Ascending aorta (tissue), 2 donors: ENCODE measurements at regions of chr11 and their contacts with region 1.

Region 1: DNA sequence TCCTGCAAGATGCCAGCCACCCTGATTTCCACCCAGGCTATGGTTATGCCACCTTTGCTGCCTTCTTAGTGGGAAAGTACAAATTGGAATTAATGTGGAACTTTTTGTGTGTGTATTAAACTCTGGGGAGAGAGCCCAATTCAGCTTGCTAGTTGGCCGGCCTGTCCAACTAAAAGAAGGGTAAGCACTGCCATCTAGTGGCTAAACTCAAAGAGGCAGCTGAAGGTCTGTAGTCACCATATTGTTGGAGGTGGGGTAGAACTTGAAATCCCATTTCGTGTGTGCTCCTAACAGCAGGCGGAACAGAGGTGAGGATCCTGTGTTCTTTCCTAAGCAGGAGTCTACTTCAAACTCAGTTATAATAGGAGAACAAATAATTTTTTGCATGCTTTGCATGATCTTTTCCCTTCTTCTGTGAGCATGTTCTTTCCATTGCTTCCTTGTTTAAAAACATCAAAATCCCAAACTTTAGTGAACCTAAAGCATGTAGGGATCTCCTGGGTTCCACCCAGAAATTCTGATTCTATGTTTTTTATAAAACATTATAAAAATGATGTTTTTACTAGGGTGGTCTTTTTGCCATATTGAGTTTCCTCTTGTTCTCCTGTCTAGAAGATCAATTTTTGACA is 138.8 kb upstream of the SORL1-AS1 start:
- DNase-seq: peak in 1 of 2 donors; percentile 85
- H3K4me3 ChIP-seq: no peak overlapping the region
- H3K27ac ChIP-seq: no peak overlapping the region
- H3K4me1 ChIP-seq: peaks cover 5 to 11% of the 10 kb centered on the region in 2 donors
- H3K27me3 ChIP-seq: no peaks in the 10 kb centered on the region
- CTCF ChIP-seq: peak; percentile 68 to 86 (median 84)

Region 2: GRCh38 chr11:120709808-120710207 is 881.7 kb before region 1 on chr11:
- intact Hi-C with region 1: no loop called
- DNase-seq: no peak
- H3K4me3 ChIP-seq: no peak overlapping the region
- H3K27ac ChIP-seq: no peak overlapping the region
- H3K4me1 ChIP-seq: no peaks in the 10 kb centered on the region
- H3K27me3 ChIP-seq: no peaks in the 10 kb centered on the region
- CTCF ChIP-seq: no peak

Region 3: DNA sequence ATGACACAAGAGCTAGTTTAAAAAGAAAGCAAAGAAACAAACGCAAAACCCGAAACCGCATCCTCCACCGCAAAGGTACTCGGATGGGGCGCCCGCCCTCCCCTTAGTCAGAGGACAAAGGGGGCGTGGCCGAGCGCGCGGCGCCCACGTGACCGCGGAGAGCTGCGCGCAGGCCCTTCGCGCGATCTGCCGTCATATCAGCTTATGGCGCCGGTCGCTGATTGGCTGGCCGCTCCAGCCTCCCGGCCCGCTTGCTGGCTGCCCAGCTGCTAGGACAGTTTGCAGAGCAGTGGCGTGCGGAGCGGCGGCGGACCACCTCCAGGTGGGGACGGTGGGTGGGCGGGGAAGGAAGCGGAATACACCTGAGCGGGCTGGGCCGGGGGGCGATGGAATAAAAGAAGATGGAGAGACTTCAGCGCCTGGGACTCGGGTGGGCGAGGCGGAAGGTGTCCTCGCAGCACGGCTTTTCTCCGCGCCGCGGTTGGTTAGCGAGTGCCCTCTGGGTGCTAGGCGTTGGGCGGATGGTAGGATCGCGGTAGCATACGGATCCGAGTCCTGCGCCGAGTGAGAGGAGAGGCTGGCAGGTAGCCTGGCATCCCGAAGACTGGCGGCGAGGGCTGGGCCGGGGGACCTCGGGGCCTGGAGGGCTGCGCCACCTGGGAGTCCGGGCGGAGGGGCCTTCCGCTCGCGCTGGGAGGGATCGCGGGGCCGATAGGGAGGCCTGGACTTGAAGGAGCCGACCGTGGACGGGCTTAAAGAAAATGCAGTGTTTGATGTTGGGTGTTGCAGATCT is 298.8 kb before region 1 on chr11 and contains the start of gene SC5D:
- intact Hi-C with region 1: loop called (anchors 1 kb)
- DNase-seq: peak; percentile 89 to 97
- H3K4me3 ChIP-seq: peak within 1 kb of the TSS; percentile 61 to 90
- H3K27ac ChIP-seq: peak within 1 kb of the TSS; percentile 76 to 91
- H3K4me1 ChIP-seq: peaks cover 0 to 7% of the 10 kb centered on the region in 2 donors
- H3K27me3 ChIP-seq: no peaks in the 10 kb centered on the region
- CTCF ChIP-seq: no peak
- total RNA-seq, gene SC5D: 18.8 TPM

Region 4: DNA sequence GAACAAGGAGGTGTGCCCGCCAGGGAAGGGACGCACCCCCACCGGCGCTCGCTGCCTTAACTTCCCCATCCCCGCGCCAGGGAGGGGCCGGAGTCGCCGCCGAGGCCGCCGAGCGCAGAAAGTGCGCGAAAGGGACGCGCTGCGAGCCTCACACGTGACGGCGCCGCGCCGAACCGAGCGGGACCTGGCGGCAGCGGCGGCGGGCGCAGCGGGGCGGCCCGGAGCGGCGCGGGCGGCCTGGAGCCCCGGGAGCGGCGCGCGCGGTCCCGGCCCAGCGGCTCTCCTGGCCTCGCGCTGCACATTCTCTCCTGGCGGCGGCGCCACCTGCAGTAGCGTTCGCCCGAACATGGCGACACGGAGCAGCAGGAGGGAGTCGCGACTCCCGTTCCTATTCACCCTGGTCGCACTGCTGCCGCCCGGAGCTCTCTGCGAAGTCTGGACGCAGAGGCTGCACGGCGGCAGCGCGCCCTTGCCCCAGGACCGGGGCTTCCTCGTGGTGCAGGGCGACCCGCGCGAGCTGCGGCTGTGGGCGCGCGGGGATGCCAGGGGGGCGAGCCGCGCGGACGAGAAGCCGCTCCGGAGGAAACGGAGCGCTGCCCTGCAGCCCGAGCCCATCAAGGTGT is 139.4 kb before region 1 on chr11 and contains the start of gene SORL1:
- intact Hi-C with region 1: loop called (anchors 5 kb)
- DNase-seq: peak in 1 of 2 donors; percentile 86
- H3K4me3 ChIP-seq: peak within 1 kb of the TSS; percentile 74 to 88
- H3K27ac ChIP-seq: peak within 1 kb of the TSS in 1 of 2 donors; percentile 32
- H3K4me1 ChIP-seq: peaks cover 0 to 9% of the 10 kb centered on the region in 2 donors
- H3K27me3 ChIP-seq: no peaks in the 10 kb centered on the region
- CTCF ChIP-seq: peak; percentile 58 to 77 (median 73)
- total RNA-seq, gene SORL1: 10.5 TPM

Region 5: DNA sequence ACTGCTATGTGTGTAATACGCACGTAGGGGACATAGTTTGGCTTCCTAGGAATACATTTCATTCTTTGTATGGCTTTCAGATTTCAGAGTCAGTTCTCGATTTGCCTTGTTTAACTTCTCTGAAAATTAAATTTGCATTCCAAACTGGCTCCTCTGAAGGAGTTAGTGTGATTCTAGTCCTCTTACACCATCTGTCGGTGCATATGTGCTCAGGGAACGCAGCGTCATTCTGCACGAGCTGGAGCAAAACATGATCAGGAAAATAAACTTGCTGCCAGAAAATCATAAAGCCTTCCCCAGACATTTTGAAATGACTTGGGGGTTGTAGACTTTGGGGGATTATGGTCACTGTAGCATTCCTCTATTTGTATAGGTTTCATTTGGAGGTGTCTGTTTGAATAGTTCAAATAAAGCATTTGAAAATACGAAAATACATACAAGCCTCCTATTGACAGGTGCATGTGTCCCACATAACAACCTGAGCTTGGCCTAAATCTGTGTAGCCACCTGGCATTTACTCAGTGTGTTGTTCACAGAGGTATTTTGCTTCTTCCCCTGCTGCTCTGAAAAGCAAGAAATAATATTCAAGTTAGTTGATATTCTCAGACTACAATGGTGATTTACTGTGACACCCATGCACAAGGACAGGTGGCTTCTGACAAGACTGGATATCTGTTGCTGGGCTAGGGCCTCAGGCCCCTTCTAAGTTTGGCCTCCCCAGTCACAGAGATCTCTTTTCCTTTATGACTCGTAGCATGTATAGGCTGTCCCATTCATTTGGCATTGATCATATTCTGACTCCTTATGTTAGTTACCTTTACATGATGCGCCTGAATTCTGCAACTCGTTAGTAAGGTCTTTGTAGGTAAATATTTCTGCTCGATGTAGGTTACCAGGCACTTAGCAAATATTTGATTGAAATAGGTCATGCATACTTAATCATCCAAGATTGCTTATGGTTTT is 57.1 kb before region 1 on chr11:
- intact Hi-C with region 1: loop called (anchors 2 kb)
- DNase-seq: no peak
- H3K4me3 ChIP-seq: no peak overlapping the region
- H3K27ac ChIP-seq: no peak overlapping the region
- H3K4me1 ChIP-seq: no peaks in the 10 kb centered on the region
- H3K27me3 ChIP-seq: no peaks in the 10 kb centered on the region
- CTCF ChIP-seq: peak; percentile 45 to 73 (median 64)

Region 6: GRCh38 chr11:121575250-121575962 is 16.1 kb before region 1 on chr11:
- intact Hi-C with region 1: no loop called
- DNase-seq: peak; percentile 59 to 82
- H3K4me3 ChIP-seq: no peak overlapping the region
- H3K27ac ChIP-seq: no peak overlapping the region
- H3K4me1 ChIP-seq: no peaks in the 10 kb centered on the region
- H3K27me3 ChIP-seq: no peaks in the 10 kb centered on the region
- CTCF ChIP-seq: no peak

Region 7: GRCh38 chr11:121643535-121644512 is 52.3 kb after region 1 on chr11:
- intact Hi-C with region 1: no loop called
- DNase-seq: no peak
- H3K4me3 ChIP-seq: no peak overlapping the region
- H3K27ac ChIP-seq: no peak overlapping the region
- H3K4me1 ChIP-seq: no peaks in the 10 kb centered on the region
- H3K27me3 ChIP-seq: no peaks in the 10 kb centered on the region
- CTCF ChIP-seq: no peak